Left colon (tissue), 2 donors: ENCODE measurements at regions of chr12 and their contacts with region 1.

Region 1: DNA sequence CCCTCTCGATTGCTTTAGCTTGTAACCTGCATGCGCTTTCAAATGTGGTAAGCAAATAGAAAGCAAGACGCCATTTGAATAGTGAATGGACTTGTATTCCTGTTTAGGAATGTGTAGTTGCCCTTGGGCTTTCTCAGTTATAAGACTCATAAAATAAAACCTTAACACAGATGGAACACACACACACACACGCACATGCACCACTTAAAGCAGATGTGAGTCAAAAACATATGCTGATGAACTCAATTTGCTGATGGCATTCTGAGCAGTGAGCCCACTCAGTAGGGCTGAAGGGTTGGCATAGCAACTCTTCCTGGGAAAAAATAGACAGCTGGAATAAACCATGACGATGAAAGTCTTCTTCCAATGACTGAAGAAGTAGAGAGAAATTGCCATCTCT is 360.5 kb downstream of the APAF1 start:
- DNase-seq: no peak
- ATAC-seq: no peak

Region 2: DNA sequence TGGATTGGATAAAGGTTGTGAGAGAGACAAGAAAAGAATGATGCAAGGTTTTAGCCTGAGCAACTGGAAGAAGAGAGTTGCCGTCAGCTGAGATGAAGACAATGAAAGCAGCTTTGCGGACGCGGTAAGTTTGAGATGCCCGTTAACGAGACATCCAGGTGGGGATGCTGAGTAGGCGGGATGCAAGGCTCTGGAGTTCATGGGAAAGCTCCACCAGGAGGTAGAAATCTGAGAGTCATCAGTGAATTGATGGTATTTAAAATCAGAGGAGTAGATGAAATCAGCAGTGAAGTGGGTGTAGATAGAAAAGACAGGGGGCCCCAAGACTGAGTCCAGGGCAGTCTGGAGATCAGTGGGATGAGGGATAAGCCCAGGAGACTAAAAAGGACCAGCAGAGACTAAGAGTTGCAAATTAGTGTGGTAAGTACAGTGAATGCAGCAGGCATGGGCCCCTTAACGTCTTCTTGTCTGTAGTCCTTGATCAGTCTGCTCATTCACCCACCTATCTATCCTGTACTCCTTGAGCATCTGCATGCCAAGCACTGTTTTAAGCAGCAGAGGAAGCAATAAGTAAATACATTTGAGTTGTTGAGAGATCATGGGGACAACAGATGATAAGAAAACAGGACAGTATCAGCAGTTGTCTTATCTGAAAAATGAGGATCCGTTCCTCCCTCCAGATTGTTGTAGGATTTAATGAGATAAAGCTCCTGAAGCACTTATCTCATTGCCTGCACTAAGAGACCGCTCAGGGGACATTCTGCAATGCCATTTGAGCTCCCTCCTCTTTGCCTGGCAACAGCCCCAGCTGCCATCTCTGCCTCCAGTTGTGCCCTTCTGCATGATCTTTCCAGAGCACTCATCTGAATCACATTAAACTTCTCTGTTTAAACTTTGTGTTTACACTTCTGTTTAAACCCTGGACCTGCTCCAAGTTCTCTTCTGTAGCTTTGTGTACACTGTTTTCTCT is 269.0 kb before region 1 on chr12:
- intact Hi-C with region 1: loop called in 1 of 2 experiments (anchors 10 kb)
- DNase-seq: no peak
- ATAC-seq: peak; percentile 63

Region 3: DNA sequence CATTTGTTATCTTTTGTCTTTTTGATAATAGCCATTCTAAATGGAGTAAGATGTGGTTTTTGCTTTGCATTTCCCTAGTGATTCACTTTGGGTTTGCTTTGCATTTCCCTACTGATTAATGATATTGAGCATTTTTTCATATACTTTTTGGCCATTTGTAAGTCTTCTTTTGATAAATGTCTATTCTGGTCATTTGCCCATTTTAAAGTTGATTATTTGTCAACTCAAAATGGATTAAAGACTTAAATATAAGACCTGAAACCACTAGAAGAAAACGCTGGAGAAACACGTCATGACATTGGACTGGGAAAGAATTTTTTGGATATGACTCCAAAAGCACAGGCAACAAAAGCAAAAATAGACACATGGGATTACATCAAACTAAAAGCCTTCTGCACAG is 212.5 kb before region 1 on chr12:
- intact Hi-C with region 1: no loop called
- DNase-seq: no peak
- ATAC-seq: no peak

Region 4: DNA sequence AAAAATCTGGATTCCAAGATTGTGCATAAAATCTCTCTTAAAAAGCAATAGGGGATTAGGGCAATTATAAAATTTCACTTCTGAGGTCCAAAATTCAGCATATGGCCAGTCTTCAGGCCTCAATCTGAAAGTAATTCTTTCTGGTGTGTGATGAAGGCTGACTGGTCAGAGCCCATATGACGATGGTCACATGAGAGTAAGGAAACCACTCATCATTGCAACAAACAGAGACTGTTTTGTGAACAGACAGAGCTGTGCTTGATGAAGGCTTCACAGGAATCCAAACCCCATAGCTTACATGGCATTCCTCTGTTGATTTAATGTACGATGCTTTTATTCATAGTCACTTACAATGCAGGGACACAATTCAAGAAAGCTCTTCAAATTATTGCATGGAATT is 122.4 kb before region 1 on chr12:
- intact Hi-C with region 1: no loop called
- DNase-seq: no peak
- ATAC-seq: no peak

Region 5: DNA sequence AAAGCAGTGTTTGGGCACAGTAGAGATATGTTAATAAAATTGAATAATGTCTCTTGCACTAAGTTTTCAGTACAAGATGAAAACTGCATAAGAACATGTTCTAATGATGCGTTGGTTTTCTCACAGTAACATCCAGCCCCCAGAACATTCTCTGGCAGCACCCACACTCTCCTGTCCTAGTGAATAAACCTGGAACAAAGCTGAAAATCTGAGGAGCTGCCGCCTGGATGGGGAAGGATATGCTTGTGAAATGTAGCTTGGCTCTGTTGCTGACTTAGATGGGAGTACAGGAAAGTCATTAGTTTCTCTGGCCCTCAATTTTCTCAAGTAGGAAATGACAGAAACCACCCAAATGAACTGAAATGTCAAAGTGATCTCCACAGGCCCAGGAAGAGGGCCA is 36.7 kb before region 1 on chr12:
- intact Hi-C with region 1: no loop called
- DNase-seq: no peak
- ATAC-seq: no peak